ENCODE measurements at regions of chr11 and their contacts with region 1.

Region 1: GRCh38 chr11:64652586-64653387 is 61.8 kb downstream of the SLC22A12 start:
- DNase-seq: peak; percentile 57
- ATAC-seq: peak; percentile 78
- H3K4me3 ChIP-seq: no peak overlapping the region
- H3K27ac ChIP-seq: no peak overlapping the region
- H3K4me1 ChIP-seq: no peaks in the 10 kb centered on the region
- H3K27me3 ChIP-seq: peaks cover 3 to 40% of the 10 kb centered on the region in 2 experiments; a peak in 4 of 5 replicates
- CTCF ChIP-seq: peak; percentile 96
- EP300 ChIP-seq: no peak
- POLR2A ChIP-seq: no peak
- RAD21 ChIP-seq: peak; percentile 90

Region 2: DNA sequence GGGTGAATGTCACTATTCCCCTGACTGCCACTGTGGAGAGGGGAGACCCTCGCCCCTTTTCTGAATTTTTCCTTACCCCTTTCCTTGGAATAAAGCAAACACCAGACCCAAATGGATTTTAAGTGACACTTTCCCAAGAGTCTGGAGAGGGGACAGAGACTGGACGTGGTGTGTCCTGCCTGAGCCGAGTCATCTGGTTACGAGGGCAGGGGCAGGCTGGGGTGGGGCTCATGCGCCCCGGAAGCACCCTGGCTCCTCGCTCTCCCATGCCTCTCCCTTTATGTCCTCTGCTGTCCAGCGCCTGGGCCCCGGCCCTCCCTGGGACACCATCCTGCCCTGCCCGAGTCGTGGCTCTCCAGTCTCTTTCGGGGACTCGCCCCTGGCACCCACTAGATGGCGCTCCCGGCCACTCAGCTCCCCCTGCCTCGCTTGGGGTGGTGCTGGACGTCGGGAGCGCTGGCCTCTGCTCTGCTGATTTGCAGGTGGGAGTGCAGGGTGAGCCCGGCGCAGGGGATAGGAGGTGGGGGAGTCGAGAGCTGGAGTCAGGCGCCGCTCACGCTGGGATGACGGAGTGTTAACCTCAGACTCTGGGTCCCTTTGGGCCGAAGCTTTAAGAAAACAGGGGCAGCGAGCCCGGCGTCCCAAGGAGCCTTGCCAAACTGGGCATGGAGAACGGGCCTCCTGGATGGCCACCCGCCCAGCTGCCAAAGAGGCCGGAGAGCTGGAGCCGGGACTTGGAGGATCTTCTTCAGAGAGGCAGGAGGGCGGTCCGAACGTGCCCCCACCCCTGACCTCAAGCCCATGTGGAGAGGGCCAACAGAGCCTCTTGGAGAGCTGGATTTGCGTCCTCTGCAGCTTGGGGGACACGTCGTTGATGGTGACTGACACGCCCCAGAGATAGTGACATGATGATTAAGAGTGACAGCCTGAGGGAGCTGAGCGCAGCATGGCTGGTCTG is 203.9 kb before region 1 on chr11:
- CTCF ChIA-PET with region 1: interaction called, 13 read pairs
- POLR2A ChIA-PET with region 1: no interaction called
- in situ Hi-C with region 1: loop called (anchors 10 kb)
- intact Hi-C with region 1: loop called (anchors 5 kb)
- DNase-seq: peak; percentile 53
- ATAC-seq: peak; percentile 97
- H3K4me3 ChIP-seq: peak overlapping the region in 1 of 3 experiments; percentile 15; a peak in 1 of 6 replicates
- H3K27ac ChIP-seq: no peak overlapping the region
- H3K4me1 ChIP-seq: peaks cover 17% of the 10 kb centered on the region
- H3K27me3 ChIP-seq: peaks cover 3 to 53% of the 10 kb centered on the region in 2 experiments; a peak in 3 of 5 replicates
- CTCF ChIP-seq: peak; percentile 94
- EP300 ChIP-seq: no peak
- POLR2A ChIP-seq: no peak
- RAD21 ChIP-seq: peak; percentile 67

Region 3: DNA sequence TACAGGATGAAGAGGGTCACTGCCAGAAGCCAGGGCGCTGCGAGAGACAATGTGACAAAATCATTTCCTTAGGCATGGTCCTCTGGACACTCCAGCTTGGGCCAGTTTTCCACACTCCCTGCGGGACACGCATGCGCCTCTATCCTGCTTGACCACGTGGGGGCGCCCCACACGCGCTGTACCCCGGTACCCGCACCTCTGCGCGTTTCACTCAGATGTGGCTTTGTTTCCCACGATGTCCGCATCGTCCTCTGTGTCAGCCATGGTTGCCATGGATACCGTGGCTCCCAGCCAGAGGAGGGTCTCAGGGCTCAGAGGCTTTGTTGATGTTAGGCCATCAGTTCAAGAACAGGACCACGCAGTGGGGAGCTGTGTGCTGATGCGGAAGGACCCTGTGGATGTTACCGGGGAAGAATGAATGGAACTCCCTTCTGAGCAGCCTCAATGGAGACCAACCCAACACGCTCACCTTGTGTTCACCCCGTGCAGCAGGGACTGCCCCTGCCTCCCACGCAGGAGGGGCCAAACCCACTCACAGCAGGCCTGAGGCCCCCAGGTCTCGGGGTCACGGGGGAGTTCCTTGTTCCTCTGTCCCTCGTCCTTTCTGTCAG is 162.9 kb before region 1 on chr11:
- CTCF ChIA-PET with region 1: interaction called, 20 read pairs
- POLR2A ChIA-PET with region 1: no interaction called
- in situ Hi-C with region 1: no loop called
- intact Hi-C with region 1: loop called (anchors 1 kb)
- DNase-seq: peak; percentile 7
- ATAC-seq: peak; percentile 92
- H3K4me3 ChIP-seq: no peak overlapping the region
- H3K27ac ChIP-seq: no peak overlapping the region
- H3K4me1 ChIP-seq: no peaks in the 10 kb centered on the region
- H3K27me3 ChIP-seq: peaks cover 7 to 56% of the 10 kb centered on the region in 2 experiments
- CTCF ChIP-seq: peak; percentile 89
- EP300 ChIP-seq: no peak
- POLR2A ChIP-seq: no peak
- RAD21 ChIP-seq: peak; percentile 78

Region 4: GRCh38 chr11:64553551-64554201 is 99.1 kb before region 1 on chr11:
- CTCF ChIA-PET with region 1: interaction called, 4 read pairs
- POLR2A ChIA-PET with region 1: no interaction called
- in situ Hi-C with region 1: no loop called
- intact Hi-C with region 1: loop called (anchors 1 kb)
- DNase-seq: peak; percentile 39
- ATAC-seq: peak; percentile 49
- H3K4me3 ChIP-seq: no peak overlapping the region
- H3K27ac ChIP-seq: no peak overlapping the region
- H3K4me1 ChIP-seq: peaks cover 39% of the 10 kb centered on the region
- H3K27me3 ChIP-seq: peaks cover 0 to 10% of the 10 kb centered on the region in 2 experiments; a peak in 2 of 5 replicates
- CTCF ChIP-seq: peak; percentile 91
- EP300 ChIP-seq: no peak
- POLR2A ChIP-seq: no peak
- RAD21 ChIP-seq: peak; percentile 87

Region 5: DNA sequence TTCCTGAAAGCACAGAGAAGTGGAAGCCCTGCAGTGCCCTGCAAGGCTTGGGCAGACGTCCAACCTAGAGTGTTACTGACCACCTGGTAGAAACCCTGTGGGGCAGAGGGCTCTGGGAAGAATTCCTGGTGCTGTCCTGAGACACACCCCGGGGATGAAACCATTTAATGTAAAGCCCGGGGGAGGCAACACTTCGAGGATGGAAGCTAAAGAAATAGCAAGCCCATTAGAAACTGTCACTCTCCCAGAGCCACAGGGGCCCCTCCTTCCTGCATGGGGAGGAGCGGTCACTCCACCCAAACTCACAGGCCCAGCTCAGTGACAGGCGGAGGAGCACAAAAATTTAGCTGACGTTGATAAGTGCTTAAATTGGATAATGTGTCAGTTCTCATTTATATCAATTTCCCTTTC is 12.6 kb after region 1 on chr11:
- CTCF ChIA-PET with region 1: no interaction called
- POLR2A ChIA-PET with region 1: no interaction called
- in situ Hi-C with region 1: no loop called
- intact Hi-C with region 1: no loop called
- DNase-seq: no peak
- ATAC-seq: no peak
- H3K4me3 ChIP-seq: no peak overlapping the region
- H3K27ac ChIP-seq: no peak overlapping the region
- H3K4me1 ChIP-seq: no peaks in the 10 kb centered on the region
- H3K27me3 ChIP-seq: peaks cover 6 to 47% of the 10 kb centered on the region in 2 experiments; a peak in 4 of 5 replicates
- CTCF ChIP-seq: no peak
- EP300 ChIP-seq: no peak
- POLR2A ChIP-seq: no peak
- RAD21 ChIP-seq: no peak

Measured in HepG2 (cell line).